PC-9 (cell line): ENCODE measurements at regions of chr10 and their contacts with region 1.

Region 1: DNA sequence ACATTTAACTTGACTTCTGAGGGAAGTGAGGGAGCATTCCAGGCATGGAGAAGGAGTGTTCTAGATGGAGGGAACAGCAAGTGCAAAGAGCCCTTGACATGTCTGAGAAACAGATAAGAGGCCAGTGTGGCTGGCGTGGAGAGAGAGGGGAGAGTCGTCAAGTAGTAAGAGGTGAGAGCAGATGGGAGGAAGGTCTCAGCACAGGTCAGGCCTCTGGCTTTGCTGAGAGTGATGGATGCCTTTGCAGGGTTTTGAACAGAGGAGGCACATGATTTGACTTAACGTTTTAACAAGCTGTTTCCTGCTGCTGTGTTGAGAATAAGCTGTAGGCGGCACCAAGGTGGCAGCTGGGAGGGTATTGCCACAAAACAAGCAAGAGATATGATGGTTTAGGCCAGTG is 97.2 kb downstream of the KAT6B start:
- DNase-seq: no peak
- H3K4me3 ChIP-seq: peak overlapping the region; percentile 34; the same call in 1 of the 2 replicates
- H3K27ac ChIP-seq: peak overlapping the region; percentile 92
- H3K4me1 ChIP-seq: peaks cover 89% of the 10 kb centered on the region
- H3K27me3 ChIP-seq: no peaks in the 10 kb centered on the region
- CTCF ChIP-seq: no peak

Region 2: DNA sequence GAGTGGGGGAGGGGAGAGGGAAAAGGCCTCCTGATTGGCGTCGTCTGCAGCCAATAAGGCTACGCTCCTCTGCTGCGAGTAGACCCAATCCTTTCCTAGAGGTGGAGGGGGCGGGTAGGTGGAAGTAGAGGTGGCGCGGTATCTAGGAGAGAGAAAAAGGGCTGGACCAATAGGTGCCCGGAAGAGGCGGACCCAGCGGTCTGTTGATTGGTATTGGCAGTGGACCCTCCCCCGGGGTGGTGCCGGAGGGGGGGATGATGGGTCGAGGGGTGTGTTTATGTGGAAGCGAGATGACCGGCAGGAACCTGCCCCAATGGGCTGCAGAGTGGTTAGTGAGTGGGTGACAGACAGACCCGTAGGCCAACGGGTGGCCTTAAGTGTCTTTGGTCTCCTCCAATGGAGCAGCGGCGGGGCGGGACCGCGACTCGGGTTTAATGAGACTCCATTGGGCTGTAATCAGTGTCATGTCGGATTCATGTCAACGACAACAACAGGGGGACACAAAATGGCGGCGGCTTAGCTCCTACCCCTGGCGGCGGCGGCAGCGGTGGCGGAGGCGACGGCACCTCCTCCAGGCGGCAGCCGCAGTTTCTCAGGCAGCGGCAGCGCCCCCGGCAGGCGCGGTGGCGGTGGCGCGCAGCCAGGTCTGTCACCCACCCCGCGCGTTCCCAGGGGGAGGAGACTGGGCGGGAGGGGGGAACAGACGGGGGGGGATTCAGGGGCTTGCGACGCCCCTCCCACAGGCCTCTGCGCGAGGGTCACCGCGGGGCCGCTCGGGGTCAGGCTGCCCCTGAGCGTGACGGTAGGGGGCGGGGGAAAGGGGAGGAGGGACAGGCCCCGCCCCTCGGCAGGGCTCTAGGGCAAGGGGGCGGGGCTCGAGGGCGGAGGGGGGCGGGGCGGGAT is 97.2 kb before region 1 on chr10 and contains the start of gene KAT6B:
- CTCF ChIA-PET with region 1: no interaction called
- POLR2A ChIA-PET with region 1: no interaction called
- intact Hi-C with region 1: loop called (anchors 1 kb)
- DNase-seq: peak; percentile 99 to 100
- H3K4me3 ChIP-seq: peak within 1 kb of the TSS; percentile 85
- H3K27ac ChIP-seq: peak within 1 kb of the TSS; percentile 91
- H3K4me1 ChIP-seq: peaks cover 19% of the 10 kb centered on the region
- H3K27me3 ChIP-seq: no peaks in the 10 kb centered on the region
- CTCF ChIP-seq: peak; percentile 38; the same call in 1 of the 2 replicates
- total RNA-seq, gene KAT6B: 26.3 and 30.9 TPM in 2 replicates